H1 (cell line): ENCODE measurements at regions of chr2 and their contacts with region 1.

Region 1: GRCh38 chr2:231706731-231707624 is 1.3 kb upstream of the PTMA start:
- DNase-seq: peak; percentile 96 to 98
- H3K4me3 ChIP-seq: peak overlapping the region; percentile 85 to 96 (median 90)
- H3K27ac ChIP-seq: peak overlapping the region; percentile 99
- H3K4me1 ChIP-seq: peaks cover 0 to 14% (median 8%) of the 10 kb centered on the region in 4 experiments; a peak in 6 of 7 replicates
- H3K27me3 ChIP-seq: no peaks in the 10 kb centered on the region
- CTCF ChIP-seq: peak in 2 of 3 experiments; percentile 72 to 98; a peak in 3 of 4 replicates
- EP300 ChIP-seq: no peak
- POLR2A ChIP-seq: peak in 1 of 2 experiments; percentile 96; a peak in 2 of 3 replicates
- RAD21 ChIP-seq: no peak; a peak in 1 of 4 replicates

Region 2: GRCh38 chr2:231364961-231365810 is 341.8 kb before region 1 on chr2:
- CTCF ChIA-PET with region 1: no interaction called
- POLR2A ChIA-PET with region 1: no interaction called
- DNase-seq: no peak
- H3K4me3 ChIP-seq: no peak overlapping the region
- H3K27ac ChIP-seq: no peak overlapping the region
- H3K4me1 ChIP-seq: peaks cover 4 to 23% (median 7%) of the 10 kb centered on the region in 4 experiments
- H3K27me3 ChIP-seq: no peaks in the 10 kb centered on the region
- CTCF ChIP-seq: no peak
- EP300 ChIP-seq: no peak
- POLR2A ChIP-seq: no peak
- RAD21 ChIP-seq: no peak

Region 3: GRCh38 chr2:231662028-231662810 is 44.8 kb before region 1 on chr2:
- CTCF ChIA-PET with region 1: interaction called, 555 read pairs
- POLR2A ChIA-PET with region 1: interaction called, 53 read pairs
- DNase-seq: peak; percentile 97 to 98
- H3K4me3 ChIP-seq: peak overlapping the region; percentile 14 to 54 (median 24); a peak in 6 of 8 replicates
- H3K27ac ChIP-seq: peak overlapping the region; percentile 95
- H3K4me1 ChIP-seq: peaks cover 0 to 26% (median 10%) of the 10 kb centered on the region in 4 experiments; a peak in 6 of 7 replicates
- H3K27me3 ChIP-seq: peaks cover 0 to 10% (median 3%) of the 10 kb centered on the region in 4 experiments; a peak in 5 of 7 replicates
- CTCF ChIP-seq: 0 out of 4 replicates have a peak, but pooled peaks of 1 of the 3 experiments have one; percentile 5
- EP300 ChIP-seq: peak; percentile 42 to 63; a peak in 1 of 3 replicates
- POLR2A ChIP-seq: peak in 1 of 2 experiments; percentile 79; a peak in 2 of 3 replicates
- RAD21 ChIP-seq: peak in 1 of 2 experiments; percentile 15; a peak in 1 of 4 replicates

Region 4: DNA sequence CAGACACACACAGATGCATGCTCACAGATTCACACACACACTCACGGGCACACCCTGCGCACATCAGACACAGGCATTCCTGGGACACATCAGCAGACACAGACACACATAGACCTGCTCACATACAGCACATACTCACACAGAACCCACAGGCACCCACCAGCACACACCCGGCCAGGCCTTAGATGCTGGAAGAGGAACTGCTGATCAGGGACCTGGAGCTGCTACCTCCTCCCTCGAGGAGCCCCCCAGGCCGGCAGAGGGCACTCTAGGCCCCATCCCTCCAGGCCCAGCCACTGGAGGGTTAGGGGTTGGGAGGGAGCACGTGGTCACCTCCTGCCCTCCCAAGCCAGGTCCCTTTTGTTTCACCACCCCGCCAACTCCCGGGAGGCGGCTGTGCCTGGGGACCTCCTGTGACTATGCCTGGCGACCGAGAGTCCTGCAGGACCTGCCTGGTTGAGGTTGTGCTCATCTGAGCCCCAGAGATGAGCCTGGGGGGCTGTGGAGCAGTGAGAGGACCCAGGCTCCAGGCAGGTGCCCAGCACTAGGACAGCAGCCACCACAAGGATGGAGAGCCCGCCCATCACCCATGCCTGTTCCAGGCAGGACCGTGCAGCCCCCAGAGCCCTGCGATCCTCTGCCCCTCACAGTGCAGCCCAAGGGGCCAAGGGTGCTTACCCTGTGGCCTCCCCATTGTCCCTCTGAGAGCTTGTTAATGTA is 19.7 kb before region 1 on chr2:
- CTCF ChIA-PET with region 1: interaction called, 555 read pairs
- POLR2A ChIA-PET with region 1: interaction called, 1,080 read pairs
- DNase-seq: peak; percentile 75 to 93
- H3K4me3 ChIP-seq: peak overlapping the region; percentile 16 to 54 (median 32); a peak in 7 of 8 replicates
- H3K27ac ChIP-seq: peak overlapping the region; percentile 46
- H3K4me1 ChIP-seq: peaks cover 4 to 42% (median 21%) of the 10 kb centered on the region in 4 experiments
- H3K27me3 ChIP-seq: no peaks in the 10 kb centered on the region
- CTCF ChIP-seq: peak in 2 of 3 experiments; percentile 79 to 92; a peak in 3 of 4 replicates
- EP300 ChIP-seq: no peak
- POLR2A ChIP-seq: peak in 1 of 2 experiments; percentile 79; a peak in 2 of 3 replicates
- RAD21 ChIP-seq: peak; percentile 61 to 67

Region 5: DNA sequence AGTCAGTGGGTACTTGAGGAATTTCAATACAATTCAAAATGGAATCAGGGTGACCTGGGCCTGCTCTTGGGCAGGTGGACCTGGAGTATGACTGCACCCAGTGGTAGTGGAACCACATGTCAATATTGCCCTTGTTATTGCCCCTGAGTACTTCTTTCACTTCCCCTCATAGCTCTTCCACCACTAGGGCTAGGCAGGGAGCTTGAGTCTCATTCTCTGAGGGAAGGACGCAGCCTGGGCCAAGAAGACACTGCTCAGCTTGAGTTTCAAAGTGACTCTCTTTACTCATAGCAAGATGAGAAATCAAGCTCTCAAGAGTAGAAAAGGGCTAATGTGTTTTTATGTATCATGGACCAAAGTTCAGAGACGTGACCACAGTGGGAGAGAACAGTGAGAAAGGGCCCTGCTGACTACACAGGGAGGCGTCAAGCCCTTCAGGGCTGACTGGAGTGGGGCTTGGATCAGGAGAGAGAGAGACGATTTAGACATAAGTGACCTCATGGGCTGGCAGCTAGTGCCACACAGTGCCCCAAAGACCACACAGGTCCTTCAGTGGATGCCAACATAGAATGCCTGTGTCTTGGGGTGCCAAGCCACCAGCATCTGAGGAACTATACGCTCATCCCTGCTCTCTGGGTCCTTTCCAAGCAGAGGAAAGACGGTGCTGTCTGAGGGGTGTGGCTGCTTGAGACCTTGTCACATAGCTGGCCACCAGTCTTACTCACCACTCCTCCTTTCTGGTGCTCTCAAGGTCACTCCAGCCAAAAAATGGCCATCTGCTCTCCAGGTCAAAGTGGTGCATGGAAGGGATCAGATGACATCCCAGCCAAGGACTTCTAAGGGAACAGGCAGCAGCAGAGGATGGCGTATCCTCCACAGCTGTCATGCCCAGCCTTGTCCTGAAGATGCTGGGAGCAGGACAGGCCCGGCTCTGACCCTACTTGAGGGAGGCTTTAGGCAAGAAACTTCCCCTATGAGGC is 14.3 kb after region 1 on chr2:
- CTCF ChIA-PET with region 1: interaction called, 34 read pairs
- POLR2A ChIA-PET with region 1: interaction called, 109 read pairs
- DNase-seq: no peak
- H3K4me3 ChIP-seq: no peak overlapping the region
- H3K27ac ChIP-seq: no peak overlapping the region
- H3K4me1 ChIP-seq: peaks cover 0 to 7% (median 3%) of the 10 kb centered on the region in 4 experiments; a peak in 2 of 7 replicates
- H3K27me3 ChIP-seq: no peaks in the 10 kb centered on the region
- CTCF ChIP-seq: peak in 1 of 3 experiments; percentile 3; a peak in 1 of 4 replicates
- EP300 ChIP-seq: no peak
- POLR2A ChIP-seq: no peak
- RAD21 ChIP-seq: no peak

Region 6: DNA sequence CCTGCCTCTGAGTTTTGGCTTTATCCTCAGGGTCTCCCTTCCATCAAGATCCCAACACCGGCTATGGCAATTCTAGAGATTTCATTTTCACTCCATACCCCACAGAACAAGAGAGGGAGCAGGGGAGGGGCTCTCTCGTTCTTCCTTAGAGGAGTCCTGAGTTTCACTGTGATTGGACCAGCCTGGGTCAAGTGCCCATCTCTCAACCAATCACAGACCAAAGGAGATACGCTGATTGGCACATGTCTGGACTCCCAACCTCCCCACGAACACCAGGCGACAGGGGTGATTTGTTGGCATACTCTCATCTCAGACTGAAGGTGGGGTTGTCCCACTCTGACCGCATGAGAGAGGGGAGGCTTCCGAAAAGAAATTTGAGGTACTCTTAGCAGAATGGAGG is 154.6 kb after region 1 on chr2:
- CTCF ChIA-PET with region 1: no interaction called
- POLR2A ChIA-PET with region 1: no interaction called
- DNase-seq: no peak
- H3K4me3 ChIP-seq: no peak overlapping the region
- H3K27ac ChIP-seq: no peak overlapping the region
- H3K4me1 ChIP-seq: no peaks in the 10 kb centered on the region
- H3K27me3 ChIP-seq: no peaks in the 10 kb centered on the region
- CTCF ChIP-seq: no peak
- EP300 ChIP-seq: no peak
- POLR2A ChIP-seq: no peak
- RAD21 ChIP-seq: no peak